Dorsolateral prefrontal cortex (tissue), 120 donors: ENCODE measurements at regions of chr11 and their contacts with region 1.

Region 1: DNA sequence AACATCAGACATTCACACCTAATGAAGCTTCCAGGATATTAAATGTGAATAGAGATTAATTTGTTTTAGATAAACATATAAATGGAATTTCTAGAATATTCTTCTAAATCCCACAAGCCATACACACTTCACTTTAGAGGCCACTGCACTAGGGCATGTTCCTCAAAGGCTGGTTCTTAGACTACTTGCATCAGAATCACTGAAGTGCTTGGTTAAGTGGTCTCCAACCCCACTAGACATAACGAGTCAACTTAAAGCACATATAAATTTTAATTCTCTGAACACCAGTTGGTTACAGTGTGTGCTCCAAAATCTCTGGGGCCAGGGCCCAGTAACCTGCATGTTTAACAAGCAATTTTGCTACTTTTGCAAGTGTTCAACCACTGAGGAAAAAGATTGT is 7.9 kb upstream of the ALKBH8 start:
- DNase-seq: no peak
- H3K4me3 ChIP-seq: no peak overlapping the region
- H3K27ac ChIP-seq: no peak overlapping the region
- H3K27me3 ChIP-seq: peaks cover 0 to 6% (median 0%) of the 10 kb centered on the region in 45 donors
- CTCF ChIP-seq: no peak

Region 2: DNA sequence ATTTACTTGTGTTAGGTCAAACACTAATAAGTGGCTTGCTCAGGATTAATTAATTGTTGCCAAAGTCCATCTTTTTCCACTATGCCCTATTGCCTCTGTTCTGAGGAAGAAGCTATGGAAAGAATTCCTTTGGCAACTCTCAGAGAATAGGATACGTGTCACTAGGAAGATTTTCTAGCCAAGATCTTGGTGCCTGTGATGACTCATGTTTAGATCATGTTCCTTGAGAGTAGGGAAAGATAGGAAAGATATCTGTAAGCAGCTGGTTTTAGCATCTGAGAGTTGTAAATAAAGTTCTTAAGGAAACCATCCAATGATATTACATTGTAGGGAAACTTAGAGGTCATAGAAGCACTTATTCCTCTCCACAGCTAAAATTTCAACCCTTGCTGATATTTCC is 122.7 kb after region 1 on chr11:
- intact Hi-C with region 1: no loop called
- DNase-seq: no peak
- H3K4me3 ChIP-seq: no peak overlapping the region
- H3K27ac ChIP-seq: no peak overlapping the region
- H3K27me3 ChIP-seq: peaks cover 0 to 42% (median 0%) of the 10 kb centered on the region in 45 donors
- CTCF ChIP-seq: no peak

Region 3: DNA sequence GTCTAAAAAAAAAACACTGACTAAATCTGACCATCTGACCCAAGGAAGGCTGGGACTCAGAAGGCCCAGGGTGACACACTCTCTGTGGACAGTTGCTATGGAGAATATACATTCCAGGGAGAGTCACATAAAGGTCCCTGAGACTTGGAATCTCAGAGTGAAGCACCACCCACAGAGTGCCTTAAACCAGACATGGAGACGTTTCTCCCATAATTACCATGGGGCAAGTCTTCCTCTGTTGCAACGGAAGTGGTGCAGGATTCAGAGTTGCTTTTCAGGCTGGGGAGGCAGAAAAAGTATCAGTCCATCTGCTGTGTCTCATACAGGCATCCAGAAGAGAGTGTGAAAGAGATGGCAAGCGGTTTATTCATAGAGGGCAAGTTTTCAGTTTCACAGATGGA is 197.1 kb after region 1 on chr11:
- intact Hi-C with region 1: loop called (anchors 2 to 10 kb)
- DNase-seq: no peak
- H3K4me3 ChIP-seq: no peak overlapping the region
- H3K27ac ChIP-seq: no peak overlapping the region
- H3K27me3 ChIP-seq: peaks cover 0 to 13% (median 0%) of the 10 kb centered on the region in 45 donors
- CTCF ChIP-seq: no peak